T-cell (primary cell): ENCODE measurements at regions of chr5 and their contacts with region 1.

Region 1: DNA sequence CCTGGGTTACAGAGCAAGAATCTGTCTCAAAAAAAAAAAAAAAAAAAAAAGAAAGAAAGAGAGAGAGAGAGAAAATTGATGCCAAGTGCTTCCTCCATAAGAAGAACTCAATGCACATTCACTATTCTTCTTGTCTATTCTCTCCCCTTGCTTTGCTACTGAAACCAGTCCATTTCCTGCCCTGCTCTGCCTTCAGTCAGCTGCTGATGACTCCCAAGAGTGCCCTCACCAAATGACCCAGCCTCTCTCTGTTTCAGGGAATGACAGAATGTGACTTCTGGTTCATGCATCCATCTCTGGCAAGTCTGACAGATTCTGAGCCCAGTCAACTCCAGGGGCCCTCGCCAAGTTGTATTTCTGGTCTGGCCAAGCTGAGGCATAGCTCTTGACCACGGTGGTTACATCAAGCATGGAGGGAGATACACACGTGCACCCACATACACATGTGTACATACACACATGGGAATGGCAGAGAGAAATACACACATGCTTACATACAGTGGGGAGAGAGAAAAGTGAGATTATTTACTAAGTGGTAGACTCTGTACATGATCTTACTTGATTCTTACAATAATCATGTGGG is 106.2 kb downstream of the NSG2 start:
- DNase-seq: no peak
- ATAC-seq: no peak
- H3K4me3 ChIP-seq: no peak overlapping the region
- H3K4me3 Mint-ChIP-seq: no peak overlapping the region
- H3K27ac ChIP-seq: no peak overlapping the region
- H3K27ac Mint-ChIP-seq: no peak overlapping the region
- H3K4me1 ChIP-seq: no peaks in the 10 kb centered on the region
- H3K4me1 Mint-ChIP-seq: no peaks in the 10 kb centered on the region
- H3K27me3 ChIP-seq: peaks cover 0 to 14% of the 10 kb centered on the region in 2 experiments
- H3K27me3 Mint-ChIP-seq: peaks cover 10 to 15% of the 10 kb centered on the region in 2 donors

Region 2: DNA sequence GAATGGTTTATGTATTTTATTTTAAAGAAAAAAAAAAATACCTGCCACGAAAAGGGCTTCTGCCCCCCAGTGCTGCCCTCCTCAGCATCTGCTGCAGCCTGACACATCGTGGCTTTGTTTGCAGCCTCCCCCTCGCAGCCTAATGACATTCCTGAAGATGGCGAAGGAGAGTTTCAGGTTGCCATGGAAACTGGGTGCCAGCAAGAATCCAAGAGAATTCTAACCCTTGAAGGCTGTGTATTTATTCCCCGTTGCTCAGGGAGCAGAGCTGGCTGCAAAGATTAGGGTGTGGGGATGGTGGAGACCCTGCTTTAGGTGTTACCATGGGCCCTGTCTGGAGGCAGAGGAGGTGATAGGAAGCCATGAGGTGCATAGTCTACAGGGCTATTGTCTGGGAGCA is 20.5 kb after region 1 on chr5:
- CTCF ChIA-PET with region 1: no interaction called
- POLR2A ChIA-PET with region 1: no interaction called
- DNase-seq: no peak
- ATAC-seq: no peak
- H3K4me3 ChIP-seq: no peak overlapping the region
- H3K4me3 Mint-ChIP-seq: no peak overlapping the region
- H3K27ac ChIP-seq: no peak overlapping the region
- H3K27ac Mint-ChIP-seq: no peak overlapping the region
- H3K4me1 ChIP-seq: no peaks in the 10 kb centered on the region
- H3K4me1 Mint-ChIP-seq: no peaks in the 10 kb centered on the region
- H3K27me3 ChIP-seq: peaks cover 0 to 5% of the 10 kb centered on the region in 2 experiments
- H3K27me3 Mint-ChIP-seq: peaks cover 11 to 17% of the 10 kb centered on the region in 2 donors

Region 3: GRCh38 chr5:174217527-174217926 is 65.8 kb after region 1 on chr5:
- CTCF ChIA-PET with region 1: interaction called in 1 of 2 experiments, 10 read pairs
- POLR2A ChIA-PET with region 1: no interaction called
- DNase-seq: no peak
- ATAC-seq: no peak
- H3K4me3 ChIP-seq: no peak overlapping the region
- H3K4me3 Mint-ChIP-seq: no peak overlapping the region
- H3K27ac ChIP-seq: no peak overlapping the region
- H3K27ac Mint-ChIP-seq: no peak overlapping the region
- H3K4me1 ChIP-seq: no peaks in the 10 kb centered on the region
- H3K4me1 Mint-ChIP-seq: no peaks in the 10 kb centered on the region
- H3K27me3 ChIP-seq: peaks cover 0 to 7% of the 10 kb centered on the region in 2 experiments
- H3K27me3 Mint-ChIP-seq: peaks cover 7 to 10% of the 10 kb centered on the region in 2 donors